A549 (cell line): ENCODE measurements at regions of chr7 and their contacts with region 1.

Region 1: DNA sequence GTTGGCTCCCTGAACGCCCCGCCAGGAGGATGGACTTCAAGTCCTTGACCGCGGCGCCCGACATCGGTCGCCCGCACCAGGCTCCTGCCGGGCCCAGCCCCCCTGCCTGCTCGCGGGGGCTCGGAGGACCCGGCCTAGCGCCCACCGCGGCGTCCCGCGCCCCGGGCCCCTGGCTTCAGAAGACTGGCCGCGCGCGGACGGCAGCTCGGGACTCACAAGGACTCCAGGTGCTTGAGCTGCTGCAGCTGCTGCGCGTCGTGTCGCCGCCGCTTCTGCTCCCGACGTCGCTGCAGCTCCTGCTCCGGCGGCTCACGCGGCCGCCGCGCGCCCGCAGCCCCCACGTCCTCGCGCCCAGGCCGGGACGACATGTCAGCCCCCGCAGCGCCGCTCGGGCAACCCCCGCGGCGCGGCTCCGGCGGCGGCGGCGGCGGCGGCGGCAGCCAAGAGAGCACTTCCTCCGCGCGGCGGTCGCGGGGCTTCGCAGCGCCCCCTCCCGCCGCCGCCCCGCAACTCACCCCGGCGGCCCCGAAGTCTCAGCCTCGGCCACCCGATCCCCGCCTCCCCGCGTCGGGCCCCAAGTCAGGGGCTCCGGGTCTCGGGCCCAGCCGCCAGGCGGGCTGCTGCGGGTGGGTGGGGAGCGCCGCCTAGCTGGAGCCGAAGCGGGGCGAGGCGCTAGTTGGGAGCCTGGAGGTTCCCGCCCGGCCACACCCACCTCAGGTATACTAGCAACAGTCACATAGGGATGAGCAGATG is at the start of gene RP9:
- DNase-seq: peak; percentile 61 to 77
- ATAC-seq: peak; percentile 89 to 90
- H3K4me3 ChIP-seq: peak within 1 kb of the TSS; percentile 90
- H3K27ac ChIP-seq: peak within 1 kb of the TSS; percentile 90 to 97
- H3K4me1 ChIP-seq: peaks cover 13% of the 10 kb centered on the region; the same call in 2 of the 3 replicates
- CTCF ChIP-seq: peak; percentile 90
- EP300 ChIP-seq: no peak
- POLR2A ChIP-seq: peak; percentile 72
- RAD21 ChIP-seq: peak in 1 of 2 experiments; percentile 33; a peak in 2 of 5 replicates
- polyA plus RNA-seq, gene RP9: 34.4 and 51.5 TPM in 2 replicates

Region 2: GRCh38 chr7:32761451-32762205 is 347.6 kb before region 1 on chr7:
- CTCF ChIA-PET with region 1: interaction called, 20 read pairs
- POLR2A ChIA-PET with region 1: no interaction called
- DNase-seq: no peak
- ATAC-seq: no peak
- H3K4me3 ChIP-seq: no peak overlapping the region
- H3K27ac ChIP-seq: no peak overlapping the region
- H3K4me1 ChIP-seq: peaks cover 6% of the 10 kb centered on the region
- CTCF ChIP-seq: no peak
- EP300 ChIP-seq: no peak
- POLR2A ChIP-seq: no peak
- RAD21 ChIP-seq: no peak

Region 3: GRCh38 chr7:32914184-32914583 is 195.0 kb before region 1 on chr7:
- CTCF ChIA-PET with region 1: no interaction called
- POLR2A ChIA-PET with region 1: no interaction called
- DNase-seq: peak in 1 of 2 experiments; percentile 13
- ATAC-seq: peak; percentile 57 to 63; a peak in 4 of 6 replicates
- H3K4me3 ChIP-seq: no peak overlapping the region
- H3K27ac ChIP-seq: no peak overlapping the region
- H3K4me1 ChIP-seq: no peaks in the 10 kb centered on the region
- CTCF ChIP-seq: no peak
- EP300 ChIP-seq: no peak
- POLR2A ChIP-seq: no peak
- RAD21 ChIP-seq: no peak

Region 4: DNA sequence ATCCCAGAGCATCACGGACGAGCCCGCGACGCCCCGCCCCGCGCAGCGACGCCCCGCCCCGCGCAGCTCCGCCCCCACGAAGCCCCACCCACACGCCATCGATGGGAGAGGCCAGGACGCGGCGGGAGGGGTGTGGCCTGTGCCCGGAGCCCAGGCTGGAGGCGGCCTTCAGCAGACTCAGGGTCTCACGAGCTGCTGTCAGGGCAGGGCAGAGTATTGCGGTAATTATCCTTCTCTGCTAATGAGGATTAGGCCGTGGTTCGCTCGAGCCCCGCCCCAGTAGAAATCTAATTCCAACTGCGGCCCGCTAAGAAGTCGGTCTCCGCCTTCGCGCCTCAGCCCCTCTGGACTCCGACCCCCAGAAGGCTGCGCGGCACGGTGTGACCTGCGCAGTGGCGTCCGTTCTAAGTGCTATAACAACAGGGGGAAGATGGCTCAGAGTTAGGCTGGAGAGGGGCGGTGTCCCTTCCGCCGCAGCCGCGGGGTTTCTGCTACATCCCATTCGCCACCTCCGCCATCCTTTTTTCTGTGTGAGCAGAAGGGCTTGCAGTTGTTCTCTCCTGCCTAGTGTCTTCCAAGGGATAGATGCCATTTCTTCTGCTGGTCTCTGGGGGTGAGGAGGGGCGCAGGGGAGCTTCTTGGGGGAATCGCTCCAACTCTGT is 46.3 kb before region 1 on chr7:
- CTCF ChIA-PET with region 1: interaction called, 16 read pairs
- POLR2A ChIA-PET with region 1: no interaction called
- DNase-seq: peak; percentile 93 to 95
- ATAC-seq: peak; percentile 97 to 99
- H3K4me3 ChIP-seq: peak overlapping the region; percentile 95
- H3K27ac ChIP-seq: peak overlapping the region; percentile 89 to 94
- H3K4me1 ChIP-seq: peaks cover 11% of the 10 kb centered on the region; the same call in 2 of the 3 replicates
- CTCF ChIP-seq: no peak
- EP300 ChIP-seq: no peak
- POLR2A ChIP-seq: peak; percentile 88
- RAD21 ChIP-seq: no peak

Region 5: DNA sequence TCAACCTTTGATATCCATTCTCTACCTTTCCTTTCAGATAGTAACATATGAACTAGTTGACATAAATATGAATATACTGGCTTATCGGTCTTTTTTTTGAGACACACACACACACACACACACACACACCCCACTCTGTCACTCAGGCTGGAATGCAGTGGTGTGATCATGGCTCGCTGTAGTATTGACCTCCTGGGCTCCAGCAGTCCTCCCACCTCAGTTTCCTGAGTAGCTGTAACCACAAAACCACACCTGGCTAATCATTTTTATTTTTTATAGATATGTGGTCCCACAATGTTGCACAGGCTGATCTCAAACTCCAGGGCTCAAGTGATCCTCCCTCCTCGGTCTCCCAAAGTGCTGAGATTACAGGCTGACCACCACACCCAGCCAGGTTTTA is 32.4 kb before region 1 on chr7:
- CTCF ChIA-PET with region 1: interaction called, 19 read pairs
- POLR2A ChIA-PET with region 1: no interaction called
- DNase-seq: no peak
- ATAC-seq: no peak
- H3K4me3 ChIP-seq: no peak overlapping the region
- H3K27ac ChIP-seq: no peak overlapping the region
- H3K4me1 ChIP-seq: no peaks in the 10 kb centered on the region
- CTCF ChIP-seq: no peak
- EP300 ChIP-seq: no peak
- POLR2A ChIP-seq: no peak
- RAD21 ChIP-seq: no peak

Region 6: DNA sequence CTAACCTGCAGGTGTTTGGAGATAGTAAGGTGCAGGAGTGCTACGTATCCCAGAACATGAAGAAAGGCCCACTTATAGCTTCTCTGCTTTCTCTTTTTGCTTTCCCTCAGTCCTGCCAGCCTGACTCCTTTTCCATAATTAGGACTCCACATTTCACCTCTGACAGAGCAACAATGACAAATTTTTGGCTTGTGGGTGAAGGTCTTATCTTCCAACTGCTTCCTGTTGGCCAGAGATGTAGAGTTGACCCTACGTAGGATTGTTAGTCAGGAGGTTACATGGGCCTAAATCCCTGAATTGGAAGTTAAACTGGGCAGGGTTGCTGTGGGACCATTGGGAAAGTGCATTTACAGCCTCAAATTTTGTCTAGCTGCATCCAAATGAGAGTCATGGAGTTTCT is 21.3 kb before region 1 on chr7:
- CTCF ChIA-PET with region 1: interaction called, 10 read pairs
- POLR2A ChIA-PET with region 1: no interaction called
- DNase-seq: no peak
- ATAC-seq: no peak
- H3K4me3 ChIP-seq: no peak overlapping the region
- H3K27ac ChIP-seq: no peak overlapping the region
- H3K4me1 ChIP-seq: no peaks in the 10 kb centered on the region
- CTCF ChIP-seq: no peak
- EP300 ChIP-seq: no peak
- POLR2A ChIP-seq: no peak
- RAD21 ChIP-seq: no peak

Region 7: GRCh38 chr7:33128990-33129805 is 20.0 kb after region 1 on chr7 and contains the start of gene BBS9:
- CTCF ChIA-PET with region 1: interaction called, 26 read pairs
- POLR2A ChIA-PET with region 1: no interaction called
- DNase-seq: peak; percentile 92 to 95
- ATAC-seq: peak; percentile 99 to 100
- H3K4me3 ChIP-seq: peak within 1 kb of the TSS; percentile 76
- H3K27ac ChIP-seq: peak within 1 kb of the TSS; percentile 92 to 97
- H3K4me1 ChIP-seq: peaks cover 14% of the 10 kb centered on the region; the same call in 2 of the 3 replicates
- CTCF ChIP-seq: no peak
- EP300 ChIP-seq: no peak
- POLR2A ChIP-seq: peak; percentile 79
- RAD21 ChIP-seq: no peak
- polyA plus RNA-seq, gene BBS9: 9.1 and 9.2 TPM in 2 replicates